ENCODE measurements at regions of chr6 and their contacts with region 1.

Region 1: GRCh38 chr6:93419304-93420162 is at the start of gene EPHA7:
- ATAC-seq: peak; percentile 86 to 90 (median 87)
- H3K4me3 ChIP-seq: peak within 1 kb of the TSS; percentile 53 to 78 (median 67)
- H3K27ac ChIP-seq: peak within 1 kb of the TSS; percentile 67 to 71
- H3K4me1 ChIP-seq: peaks cover 0 to 12% of the 10 kb centered on the region in 2 donors
- total RNA-seq, gene EPHA7: 1.6 to 88.0 (median 20.4) TPM

Region 2: GRCh38 chr6:92810913-92811312 is 608.6 kb before region 1 on chr6:
- in situ Hi-C with region 1: loop called in 1 of 9 experiments (anchors 25 kb)
- ATAC-seq: peak in 4 of 8 experiments; percentile 16 to 76 (median 56)
- H3K4me3 ChIP-seq: no peak overlapping the region
- H3K27ac ChIP-seq: no peak overlapping the region
- H3K4me1 ChIP-seq: no peaks in the 10 kb centered on the region

Region 3: DNA sequence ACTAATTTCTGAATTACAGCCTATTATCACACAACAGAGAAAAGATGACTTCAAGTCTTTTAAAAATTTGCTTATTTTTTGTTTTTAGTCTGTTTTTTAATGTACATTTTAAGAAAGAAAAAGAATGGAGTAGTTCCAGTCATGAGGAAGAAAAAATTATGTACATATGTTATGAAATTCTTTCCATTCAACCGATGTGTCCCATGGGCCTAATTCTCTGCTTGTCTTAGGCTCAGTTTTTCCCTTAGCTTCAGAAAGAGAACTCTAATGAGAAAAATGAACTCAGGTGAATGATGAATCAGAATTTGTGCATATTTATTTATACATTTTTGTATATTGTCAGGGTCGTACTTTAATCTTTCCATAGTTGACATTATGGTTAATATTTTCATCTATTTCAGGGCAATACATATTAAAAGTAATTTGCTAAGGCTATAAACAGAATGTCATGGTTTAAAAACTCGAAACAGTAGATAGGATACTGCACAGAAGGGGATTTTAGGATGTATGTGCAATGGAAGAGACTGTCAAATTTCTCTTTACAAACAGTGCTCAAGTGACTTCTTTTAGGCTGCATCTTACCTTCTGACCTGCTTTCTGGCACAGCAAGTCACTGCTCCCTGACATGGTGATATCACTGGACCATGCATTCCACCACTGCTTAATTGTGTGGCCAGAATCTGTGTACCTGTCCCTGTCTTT is 153.3 kb before region 1 on chr6:
- in situ Hi-C with region 1: loop called in 1 of 9 experiments (anchors 10 kb)
- ATAC-seq: no peak
- H3K4me3 ChIP-seq: no peak overlapping the region
- H3K27ac ChIP-seq: no peak overlapping the region
- H3K4me1 ChIP-seq: peaks cover 0 to 2% of the 10 kb centered on the region in 2 donors

Region 4: DNA sequence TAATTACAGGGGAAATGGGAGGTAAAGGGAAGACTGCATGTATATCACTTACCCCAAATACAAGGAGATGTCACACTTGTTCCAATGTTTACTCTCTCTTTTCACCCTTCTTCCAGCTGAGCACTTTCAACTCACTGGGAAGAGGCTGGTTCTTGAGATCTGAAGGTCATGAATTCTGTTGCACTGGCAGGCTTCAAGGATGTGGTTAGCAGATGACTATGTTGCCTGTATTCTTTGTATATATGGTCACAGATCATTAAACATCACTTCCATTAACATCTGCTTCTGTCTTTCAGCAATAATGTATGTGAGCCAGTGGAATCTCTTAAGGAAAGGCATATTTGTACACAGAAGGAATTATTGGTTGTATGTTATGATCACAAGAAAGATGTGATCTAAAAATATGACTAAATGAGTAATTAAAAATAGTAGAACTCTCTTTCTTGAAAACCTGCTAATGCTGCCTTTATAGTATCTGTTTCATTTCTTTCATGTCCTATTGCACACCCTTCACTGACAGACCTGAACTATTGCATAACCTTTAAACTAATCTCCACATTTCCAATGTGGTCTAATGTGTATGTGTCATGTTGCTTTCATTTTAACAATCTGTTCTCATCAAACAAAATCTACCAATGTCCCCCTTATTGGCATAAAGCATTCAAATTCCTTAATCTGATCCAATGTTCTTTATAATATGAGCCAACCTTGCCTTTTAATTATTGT is 131.2 kb after region 1 on chr6:
- in situ Hi-C with region 1: no loop called
- ATAC-seq: peak in 2 of 8 experiments; percentile 36 to 42
- H3K4me3 ChIP-seq: no peak overlapping the region
- H3K27ac ChIP-seq: no peak overlapping the region
- H3K4me1 ChIP-seq: peaks cover 0 to 2% of the 10 kb centered on the region in 2 donors

Region 5: DNA sequence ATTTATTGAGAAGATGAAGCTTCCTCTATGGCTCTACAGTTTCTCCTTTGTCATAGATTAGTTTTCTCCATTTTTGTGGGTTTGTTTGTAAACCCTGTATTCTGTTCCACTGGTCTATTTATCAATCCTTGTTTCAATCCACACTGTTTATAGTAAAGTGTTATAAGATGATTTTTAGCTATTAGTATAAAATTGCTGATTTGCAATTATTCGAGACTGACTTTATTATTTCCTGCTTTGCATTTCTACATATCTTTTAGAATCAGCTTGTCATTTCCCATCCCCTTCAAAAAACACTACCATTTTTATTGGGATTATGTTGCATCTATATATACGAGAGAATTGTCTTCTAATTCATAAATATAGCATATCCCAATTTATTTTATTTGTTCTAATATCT is 325.8 kb after region 1 on chr6:
- in situ Hi-C with region 1: no loop called
- ATAC-seq: no peak
- H3K4me3 ChIP-seq: no peak overlapping the region
- H3K27ac ChIP-seq: no peak overlapping the region
- H3K4me1 ChIP-seq: no peaks in the 10 kb centered on the region

Region 6: GRCh38 chr6:93849857-93850256 is 430.3 kb after region 1 on chr6:
- in situ Hi-C with region 1: no loop called
- ATAC-seq: no peak
- H3K4me3 ChIP-seq: no peak overlapping the region
- H3K27ac ChIP-seq: no peak overlapping the region
- H3K4me1 ChIP-seq: peaks cover 3 to 23% of the 10 kb centered on the region in 2 donors